Activated CD4-positive, alpha-beta T cell treated with anti-CD3 and anti-CD28 coated beads, Interleukin-2, amount 10 ng/mL, durations not matched to agents 7 days and 5 days (primary cell): ENCODE measurements at regions of chr17 and their contacts with region 1.

Region 1: GRCh38 chr17:28951991-28952975 is 965 bp upstream of the PHF12 start:
- DNase-seq: peak; percentile 98
- H3K4me3 Mint-ChIP-seq: no peak overlapping the region
- H3K27ac Mint-ChIP-seq: no peak overlapping the region
- H3K4me1 Mint-ChIP-seq: peaks cover 15% of the 10 kb centered on the region
- H3K27me3 Mint-ChIP-seq: no peaks in the 10 kb centered on the region

Region 2: GRCh38 chr17:28717578-28718333 is 234.5 kb before region 1 on chr17 and contains the start of gene RAB34:
- CTCF ChIA-PET with region 1: interaction called, 8 read pairs
- POLR2A ChIA-PET with region 1: interaction called, 10 read pairs
- DNase-seq: no peak
- H3K4me3 Mint-ChIP-seq: peak within 1 kb of the TSS; percentile 70
- H3K27ac Mint-ChIP-seq: peak within 1 kb of the TSS; percentile 82
- H3K4me1 Mint-ChIP-seq: peaks cover 38% of the 10 kb centered on the region
- H3K27me3 Mint-ChIP-seq: peaks cover 13% of the 10 kb centered on the region
- total RNA-seq, gene RAB34: 11.0 to 11.8 TPM

Region 3: DNA sequence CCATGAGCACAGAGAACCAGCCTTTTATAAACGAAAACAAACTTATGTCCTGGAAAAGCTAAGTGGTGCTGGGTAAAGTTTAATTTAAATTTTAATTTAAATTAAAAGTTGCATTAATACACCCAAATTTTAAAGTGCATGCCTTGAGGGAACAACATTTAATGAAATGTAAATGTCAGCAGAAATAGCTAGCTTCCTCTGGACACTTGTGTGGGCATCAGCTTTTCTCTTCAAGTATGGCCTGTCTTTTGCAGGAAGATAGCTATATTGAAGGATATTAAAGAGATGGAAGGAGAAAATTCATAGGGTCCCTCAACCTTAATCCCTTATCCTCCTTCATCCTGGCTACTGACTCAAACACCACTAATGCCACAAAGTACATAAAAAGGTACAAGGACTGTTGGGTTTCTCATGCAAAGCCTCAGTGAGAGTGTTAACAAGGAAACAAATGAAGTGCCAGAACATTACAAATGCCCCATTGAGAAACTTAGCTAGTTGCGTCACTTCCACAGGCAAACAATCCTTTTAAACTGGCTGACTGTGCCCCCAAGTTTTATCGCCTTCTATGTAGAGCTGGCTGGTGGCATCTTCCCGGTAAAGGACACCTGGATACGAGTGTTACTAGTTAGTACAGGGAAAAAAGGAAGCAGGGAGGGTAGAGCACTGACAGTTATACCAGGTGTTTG is 15.1 kb before region 1 on chr17:
- CTCF ChIA-PET with region 1: interaction called, 15 read pairs
- POLR2A ChIA-PET with region 1: no interaction called
- DNase-seq: no peak
- H3K4me3 Mint-ChIP-seq: no peak overlapping the region
- H3K27ac Mint-ChIP-seq: peak overlapping the region; percentile 41
- H3K4me1 Mint-ChIP-seq: peaks cover 75% of the 10 kb centered on the region
- H3K27me3 Mint-ChIP-seq: no peaks in the 10 kb centered on the region

Region 4: GRCh38 chr17:28997806-28998205 is 45.5 kb after region 1 on chr17:
- CTCF ChIA-PET with region 1: no interaction called
- POLR2A ChIA-PET with region 1: no interaction called
- DNase-seq: no peak
- H3K4me3 Mint-ChIP-seq: no peak overlapping the region
- H3K27ac Mint-ChIP-seq: no peak overlapping the region
- H3K4me1 Mint-ChIP-seq: no peaks in the 10 kb centered on the region
- H3K27me3 Mint-ChIP-seq: peaks cover 3% of the 10 kb centered on the region